ENCODE measurements at regions of chr1 and their contacts with region 1.

Region 1: GRCh38 chr1:24923485-24924113 is 6.5 kb downstream of the RUNX3 start:
- DNase-seq: no peak
- H3K4me3 ChIP-seq: no peak overlapping the region
- H3K27ac ChIP-seq: no peak overlapping the region
- H3K4me1 ChIP-seq: no peaks in the 10 kb centered on the region
- H3K27me3 ChIP-seq: peaks cover 0 to 30% of the 10 kb centered on the region in 2 donors
- CTCF ChIP-seq: no peak
- POLR2A ChIP-seq: no peak

Region 2: DNA sequence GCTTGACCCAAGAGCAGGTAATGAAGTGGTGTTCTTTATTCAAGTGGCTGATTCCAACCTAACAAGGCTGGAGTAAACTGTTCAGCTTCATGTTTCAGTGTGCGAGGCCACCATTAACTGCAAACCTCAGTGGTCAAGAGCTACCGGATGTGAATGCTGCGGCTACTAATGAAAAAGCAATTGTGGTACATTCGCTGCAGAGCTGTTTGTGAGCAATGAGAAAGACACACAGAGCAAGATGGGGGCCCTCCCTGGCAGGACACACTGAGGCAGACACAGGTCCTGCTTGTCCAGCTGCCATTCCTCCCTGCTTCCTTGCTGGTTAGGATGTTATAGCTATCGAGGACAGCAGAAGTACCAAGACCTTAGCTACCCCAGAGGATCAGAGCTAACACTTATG is 282.6 kb after region 1 on chr1:
- intact Hi-C with region 1: loop called (anchors 2 kb)
- DNase-seq: no peak
- H3K4me3 ChIP-seq: no peak overlapping the region
- H3K27ac ChIP-seq: no peak overlapping the region
- H3K4me1 ChIP-seq: no peaks in the 10 kb centered on the region
- H3K27me3 ChIP-seq: peaks cover 0 to 3% of the 10 kb centered on the region in 2 donors
- CTCF ChIP-seq: no peak
- POLR2A ChIP-seq: no peak